Breast epithelium (tissue), 4 donors: ENCODE measurements at regions of chr12 and their contacts with region 1.

Region 1: GRCh38 chr12:107474639-107475539 is 210.7 kb upstream of the PWP1 start:
- DNase-seq: no peak
- H3K4me3 ChIP-seq: no peak overlapping the region
- H3K27ac ChIP-seq: no peak overlapping the region
- H3K4me1 ChIP-seq: no peaks in the 10 kb centered on the region
- H3K27me3 ChIP-seq: no peaks in the 10 kb centered on the region
- CTCF ChIP-seq: no peak
- POLR2A ChIP-seq: no peak

Region 2: GRCh38 chr12:106276032-106276740 is 1198.7 kb before region 1 on chr12:
- intact Hi-C with region 1: loop called (anchors 5 kb)
- DNase-seq: no peak
- H3K4me3 ChIP-seq: no peak overlapping the region
- H3K27ac ChIP-seq: no peak overlapping the region
- H3K4me1 ChIP-seq: no peaks in the 10 kb centered on the region
- H3K27me3 ChIP-seq: no peaks in the 10 kb centered on the region
- CTCF ChIP-seq: no peak
- POLR2A ChIP-seq: no peak

Region 3: DNA sequence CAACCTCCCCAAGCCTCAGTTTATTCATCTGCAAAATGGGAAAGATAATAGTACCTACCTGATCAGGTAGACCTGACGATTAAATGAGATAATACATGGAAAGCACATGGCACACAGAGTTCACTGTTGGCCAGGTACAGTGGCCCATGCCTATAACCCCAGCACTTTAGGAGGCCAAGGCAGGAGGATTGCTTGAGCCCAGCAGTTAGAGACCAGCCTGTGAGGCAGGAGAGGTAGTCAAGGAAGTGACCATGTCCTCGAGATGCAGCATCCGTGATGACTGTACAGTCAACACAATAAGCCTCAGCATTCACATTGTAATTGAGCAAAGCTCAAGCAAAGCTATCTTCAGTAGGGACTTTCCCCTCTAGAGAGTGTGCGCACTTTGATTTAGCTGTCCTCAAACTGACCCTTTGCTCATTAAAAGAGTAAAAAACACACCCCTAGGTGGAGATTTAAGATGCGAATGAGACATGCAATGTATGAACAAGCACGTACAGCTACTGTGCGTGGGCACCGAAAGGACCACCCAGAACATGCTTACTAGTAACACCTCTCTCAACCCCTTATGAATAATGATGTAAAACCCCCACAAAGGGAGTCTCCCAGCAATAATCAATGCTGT is 1097.4 kb after region 1 on chr12:
- intact Hi-C with region 1: no loop called
- DNase-seq: no peak
- H3K4me3 ChIP-seq: no peak overlapping the region
- H3K27ac ChIP-seq: no peak overlapping the region
- H3K4me1 ChIP-seq: no peaks in the 10 kb centered on the region
- H3K27me3 ChIP-seq: no peaks in the 10 kb centered on the region
- CTCF ChIP-seq: no peak
- POLR2A ChIP-seq: no peak